ENCODE measurements at regions of chr10 and their contacts with region 1.

Region 1: DNA sequence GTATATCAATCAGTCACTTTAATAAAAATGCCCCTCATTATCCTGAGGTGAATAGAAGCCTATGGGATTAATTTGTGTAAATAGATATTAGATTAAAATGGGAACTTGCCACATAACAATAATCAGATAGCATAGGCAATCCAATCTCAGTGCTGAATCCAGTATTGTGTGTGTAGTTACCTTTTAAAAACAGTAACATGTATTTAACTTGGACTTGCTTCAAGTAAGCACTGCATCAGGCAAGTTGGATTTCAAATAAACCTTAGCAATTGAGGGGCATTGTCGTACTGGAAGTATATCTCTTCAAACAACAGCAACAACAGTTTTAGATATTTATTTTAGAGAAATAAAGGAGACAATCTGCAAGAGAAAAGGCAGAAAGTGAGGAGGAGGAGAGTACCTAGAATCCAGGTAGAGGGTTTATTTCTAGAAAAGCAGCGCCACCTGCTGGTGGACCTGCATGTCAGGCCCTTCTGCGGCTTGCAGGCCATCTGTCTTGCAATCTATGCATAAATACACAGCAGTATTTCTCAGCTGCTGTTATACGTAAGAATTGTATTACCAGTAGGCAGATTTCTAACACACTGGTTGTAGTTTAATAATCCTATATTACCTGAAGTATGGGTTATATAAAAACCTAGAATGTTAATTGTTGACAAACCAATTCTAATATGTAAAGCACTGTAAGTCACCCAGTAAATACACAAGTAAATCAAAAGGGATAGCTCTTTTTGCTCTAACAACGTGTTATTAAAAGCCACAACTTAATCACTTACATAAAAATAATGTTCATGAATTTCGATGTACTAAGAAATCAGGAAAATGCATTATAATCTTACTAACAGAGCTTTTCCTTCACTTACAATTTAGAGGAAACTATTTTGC is 652.8 kb downstream of the KCNMA1 start:
- DNase-seq: peak; percentile 100
- ATAC-seq: peak; percentile 95
- H3K4me3 ChIP-seq: no peak overlapping the region
- H3K27ac ChIP-seq: no peak overlapping the region
- H3K4me1 ChIP-seq: peaks cover 18% of the 10 kb centered on the region
- H3K27me3 ChIP-seq: no peaks in the 10 kb centered on the region
- CTCF ChIP-seq: peak; percentile 100

Region 2: GRCh38 chr10:76432274-76433012 is 552.4 kb before region 1 on chr10:
- CTCF ChIA-PET with region 1: no interaction called
- POLR2A ChIA-PET with region 1: no interaction called
- intact Hi-C with region 1: loop called (anchors 5 kb)
- DNase-seq: peak; percentile 100
- ATAC-seq: peak; percentile 89
- H3K4me3 ChIP-seq: peak overlapping the region; percentile 41
- H3K27ac ChIP-seq: peak overlapping the region; percentile 45
- H3K4me1 ChIP-seq: peaks cover 29% of the 10 kb centered on the region
- H3K27me3 ChIP-seq: no peaks in the 10 kb centered on the region
- CTCF ChIP-seq: no peak

Region 3: GRCh38 chr10:76547352-76547972 is 437.3 kb before region 1 on chr10:
- CTCF ChIA-PET with region 1: no interaction called
- POLR2A ChIA-PET with region 1: no interaction called
- intact Hi-C with region 1: loop called (anchors 1 kb)
- DNase-seq: peak; percentile 100
- ATAC-seq: peak; percentile 85
- H3K4me3 ChIP-seq: peak overlapping the region; percentile 44
- H3K27ac ChIP-seq: no peak overlapping the region
- H3K4me1 ChIP-seq: peaks cover 5% of the 10 kb centered on the region
- H3K27me3 ChIP-seq: peaks cover 26% of the 10 kb centered on the region
- CTCF ChIP-seq: peak; percentile 100

Region 4: GRCh38 chr10:76632777-76633071 is 352.1 kb before region 1 on chr10:
- CTCF ChIA-PET with region 1: no interaction called
- POLR2A ChIA-PET with region 1: no interaction called
- intact Hi-C with region 1: loop called (anchors 1 kb)
- DNase-seq: peak; percentile 90
- ATAC-seq: peak; percentile 80
- H3K4me3 ChIP-seq: no peak overlapping the region
- H3K27ac ChIP-seq: no peak overlapping the region
- H3K4me1 ChIP-seq: peaks cover 12% of the 10 kb centered on the region
- H3K27me3 ChIP-seq: peaks cover 6% of the 10 kb centered on the region; the same call in 1 of the 2 replicates
- CTCF ChIP-seq: peak; percentile 99

Region 5: GRCh38 chr10:76667408-76668370 is 317.1 kb before region 1 on chr10:
- CTCF ChIA-PET with region 1: no interaction called
- POLR2A ChIA-PET with region 1: no interaction called
- intact Hi-C with region 1: loop called (anchors 5 kb)
- DNase-seq: no peak
- ATAC-seq: no peak
- H3K4me3 ChIP-seq: no peak overlapping the region
- H3K27ac ChIP-seq: no peak overlapping the region
- H3K4me1 ChIP-seq: no peaks in the 10 kb centered on the region
- H3K27me3 ChIP-seq: peaks cover 14% of the 10 kb centered on the region; the same call in 1 of the 2 replicates
- CTCF ChIP-seq: no peak

Region 6: GRCh38 chr10:76763376-76763775 is 221.4 kb before region 1 on chr10:
- CTCF ChIA-PET with region 1: no interaction called
- POLR2A ChIA-PET with region 1: no interaction called
- intact Hi-C with region 1: loop called (anchors 5 kb)
- DNase-seq: no peak
- ATAC-seq: no peak; the same call in 1 of the 2 replicates
- H3K4me3 ChIP-seq: no peak overlapping the region
- H3K27ac ChIP-seq: no peak overlapping the region
- H3K4me1 ChIP-seq: no peaks in the 10 kb centered on the region
- H3K27me3 ChIP-seq: peaks cover 87% of the 10 kb centered on the region
- CTCF ChIP-seq: no peak

Region 7: DNA sequence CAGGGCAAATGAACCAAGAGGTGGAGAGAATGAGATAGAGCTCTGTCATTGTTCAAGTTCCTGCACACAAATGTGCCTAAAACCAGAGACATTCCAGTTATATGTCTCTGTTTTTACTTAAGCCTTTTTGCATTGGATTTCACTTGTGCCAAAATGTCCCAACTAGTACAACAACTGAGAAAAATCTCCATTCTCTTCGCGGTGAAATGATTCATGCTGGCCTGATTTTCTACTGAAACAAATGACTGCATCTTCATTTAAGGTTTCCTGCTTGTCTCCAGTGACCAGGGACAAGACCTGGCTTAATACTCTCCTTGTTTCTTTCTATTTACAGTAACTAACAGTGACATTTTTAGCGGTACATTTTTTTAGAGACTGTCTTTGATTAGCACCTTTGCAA is 62.1 kb before region 1 on chr10:
- CTCF ChIA-PET with region 1: no interaction called
- POLR2A ChIA-PET with region 1: interaction called, 20 read pairs
- intact Hi-C with region 1: no loop called
- DNase-seq: no peak
- ATAC-seq: peak; percentile 50
- H3K4me3 ChIP-seq: no peak overlapping the region
- H3K27ac ChIP-seq: no peak overlapping the region
- H3K4me1 ChIP-seq: no peaks in the 10 kb centered on the region
- H3K27me3 ChIP-seq: no peaks in the 10 kb centered on the region
- CTCF ChIP-seq: no peak

Region 8: DNA sequence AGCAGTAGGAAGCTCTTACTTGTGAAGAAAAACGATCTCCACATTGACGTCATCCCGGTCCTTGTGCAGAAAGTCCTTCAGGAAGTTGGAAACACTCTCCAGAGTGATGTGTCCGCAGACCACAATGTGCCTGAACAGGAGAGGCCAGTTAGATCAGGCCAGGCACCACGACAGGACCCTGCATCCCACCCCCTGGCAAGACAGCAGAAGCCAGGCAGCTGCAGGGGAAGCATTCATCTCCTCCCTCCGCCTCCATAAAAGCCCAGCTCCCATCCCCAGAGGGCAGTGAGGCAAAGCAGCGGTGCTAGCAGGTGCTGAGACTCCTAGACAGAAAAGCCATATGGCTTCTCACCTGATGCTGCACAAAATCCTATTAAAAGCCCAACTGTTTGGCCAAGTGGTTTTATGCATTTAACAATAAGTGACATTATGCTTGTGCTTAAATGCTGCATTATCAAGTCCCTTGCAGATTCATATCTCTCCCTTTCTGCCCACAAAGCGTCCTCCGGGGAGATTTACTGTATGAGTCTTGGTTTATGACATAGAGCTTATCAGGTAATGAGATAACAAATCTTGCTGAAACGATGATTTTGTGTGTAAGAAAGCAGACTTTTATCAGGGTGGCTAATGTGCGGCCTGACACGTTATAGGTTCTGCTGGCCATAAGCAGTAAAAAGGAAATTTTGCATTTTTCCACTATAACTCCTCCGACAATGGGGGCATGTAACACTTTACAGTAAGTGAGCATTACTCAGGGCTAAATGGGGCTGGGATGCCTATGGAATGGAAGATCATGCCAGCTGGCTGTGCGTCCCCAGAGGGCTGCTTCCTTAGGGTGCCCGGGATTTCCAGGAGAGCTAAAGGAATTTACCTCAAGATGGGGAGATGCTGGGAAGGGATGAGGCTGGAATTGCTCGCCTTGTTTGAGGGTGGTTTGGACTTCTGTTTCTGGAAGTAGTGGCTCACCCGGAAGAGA is 105.9 kb after region 1 on chr10:
- CTCF ChIA-PET with region 1: no interaction called
- POLR2A ChIA-PET with region 1: no interaction called
- intact Hi-C with region 1: no loop called
- DNase-seq: no peak
- ATAC-seq: no peak
- H3K4me3 ChIP-seq: no peak overlapping the region
- H3K27ac ChIP-seq: no peak overlapping the region
- H3K4me1 ChIP-seq: no peaks in the 10 kb centered on the region
- H3K27me3 ChIP-seq: no peaks in the 10 kb centered on the region
- CTCF ChIP-seq: no peak

Measured in PC-3 (cell line).